ENCODE measurements at regions of chr1 and their contacts with region 1.

Region 1: DNA sequence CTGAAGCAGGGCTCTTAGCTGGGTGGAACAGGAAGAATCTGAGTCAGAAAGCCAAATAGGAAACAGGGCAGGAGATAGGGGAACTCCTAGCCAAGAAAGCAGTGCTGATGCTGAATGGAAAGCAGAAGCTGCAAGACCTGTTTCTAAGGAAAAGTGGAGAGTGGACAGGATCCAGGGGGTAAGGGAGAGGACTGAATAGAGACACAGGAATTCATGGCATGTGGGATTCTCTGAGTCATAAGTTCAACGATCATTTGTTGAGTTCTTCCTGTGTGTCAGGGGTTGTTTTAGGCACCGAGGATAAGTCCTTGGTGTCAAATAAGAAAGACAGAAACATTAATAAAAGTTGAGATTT is 153.8 kb upstream of the FGGY start:
- DNase-seq: no peak

Region 2: GRCh38 chr1:59015708-59016107 is 127.4 kb before region 1 on chr1:
- intact Hi-C with region 1: loop called (anchors 2 kb)
- DNase-seq: no peak

Region 3: DNA sequence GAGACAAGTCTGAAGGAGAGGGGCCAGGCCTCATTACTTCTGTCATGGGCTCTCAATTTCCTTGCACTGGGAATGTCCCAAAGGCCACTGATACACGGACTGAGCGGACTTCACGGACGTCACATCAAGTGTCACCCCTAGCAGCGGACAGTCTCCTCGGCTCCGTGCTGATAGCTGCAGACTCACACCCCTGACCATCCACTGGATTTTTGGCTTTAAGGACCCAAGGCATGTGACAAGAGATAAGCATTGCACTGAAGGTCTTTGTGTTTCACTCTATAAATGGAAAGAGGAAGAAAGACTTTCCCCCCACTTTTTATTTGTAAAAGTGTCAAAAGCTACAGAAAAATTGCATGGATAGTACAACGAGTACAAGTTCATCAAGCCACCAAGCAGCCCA is 46.6 kb before region 1 on chr1:
- intact Hi-C with region 1: loop called (anchors 5 kb)
- DNase-seq: no peak

Region 4: DNA sequence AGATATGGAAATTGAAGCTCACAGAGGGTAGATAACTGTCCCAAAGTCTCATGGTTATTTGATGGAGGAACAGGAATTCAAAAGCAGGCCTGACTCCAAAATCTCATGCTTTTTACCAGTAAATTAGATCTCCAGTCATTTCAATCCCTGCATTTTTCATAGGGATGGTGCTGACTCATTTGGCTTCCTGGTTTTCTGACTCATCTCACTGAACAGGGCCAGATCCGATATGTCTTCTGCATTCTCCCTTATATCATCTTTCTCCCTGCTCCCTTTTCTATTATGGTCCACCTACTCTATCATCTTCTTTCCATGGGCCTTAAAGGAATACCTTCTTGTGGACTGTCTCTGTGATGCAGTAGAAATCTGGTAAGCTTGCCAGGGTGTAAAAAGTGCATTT is 341.0 kb after region 1 on chr1:
- intact Hi-C with region 1: no loop called
- DNase-seq: no peak